ENCODE measurements at regions of chr18 and their contacts with region 1.

Region 1: DNA sequence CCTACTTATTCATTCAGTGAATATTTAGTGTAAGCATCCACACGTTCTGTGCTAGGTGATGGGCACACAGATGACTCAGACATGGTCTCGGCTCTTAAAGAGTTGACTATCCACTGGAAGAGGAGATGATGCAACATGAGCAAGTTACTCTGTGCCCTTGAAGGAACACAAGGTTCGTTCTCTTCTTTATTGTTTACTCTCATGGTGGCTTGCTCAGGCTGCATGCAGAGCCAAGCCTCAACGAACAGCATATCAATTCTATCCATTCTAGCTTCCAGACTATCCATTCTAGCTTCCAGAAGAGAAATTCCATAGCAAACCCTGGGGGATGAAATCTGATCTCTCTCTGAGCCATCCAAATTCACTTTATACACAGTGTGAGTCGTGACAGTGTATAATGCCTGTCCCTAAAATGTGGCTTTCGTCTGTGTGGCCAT is 68.1 kb upstream of the CTAGE1 start:
- DNase-seq: no peak
- ATAC-seq: no peak

Region 2: GRCh38 chr18:22391407-22392345 is 94.2 kb before region 1 on chr18:
- intact Hi-C with region 1: no loop called
- DNase-seq: no peak
- ATAC-seq: no peak

Region 3: GRCh38 chr18:22524783-22525182 is 39.0 kb after region 1 on chr18:
- intact Hi-C with region 1: loop called (anchors 5 kb)
- DNase-seq: no peak
- ATAC-seq: no peak

Measured in Right ventricle myocardium inferior (tissue), 1 donor.